ENCODE measurements at regions of chr18 and their contacts with region 1.

Region 1: GRCh38 chr18:22207021-22207758 is 37.8 kb downstream of the GATA6 start:
- DNase-seq: no peak

Region 2: DNA sequence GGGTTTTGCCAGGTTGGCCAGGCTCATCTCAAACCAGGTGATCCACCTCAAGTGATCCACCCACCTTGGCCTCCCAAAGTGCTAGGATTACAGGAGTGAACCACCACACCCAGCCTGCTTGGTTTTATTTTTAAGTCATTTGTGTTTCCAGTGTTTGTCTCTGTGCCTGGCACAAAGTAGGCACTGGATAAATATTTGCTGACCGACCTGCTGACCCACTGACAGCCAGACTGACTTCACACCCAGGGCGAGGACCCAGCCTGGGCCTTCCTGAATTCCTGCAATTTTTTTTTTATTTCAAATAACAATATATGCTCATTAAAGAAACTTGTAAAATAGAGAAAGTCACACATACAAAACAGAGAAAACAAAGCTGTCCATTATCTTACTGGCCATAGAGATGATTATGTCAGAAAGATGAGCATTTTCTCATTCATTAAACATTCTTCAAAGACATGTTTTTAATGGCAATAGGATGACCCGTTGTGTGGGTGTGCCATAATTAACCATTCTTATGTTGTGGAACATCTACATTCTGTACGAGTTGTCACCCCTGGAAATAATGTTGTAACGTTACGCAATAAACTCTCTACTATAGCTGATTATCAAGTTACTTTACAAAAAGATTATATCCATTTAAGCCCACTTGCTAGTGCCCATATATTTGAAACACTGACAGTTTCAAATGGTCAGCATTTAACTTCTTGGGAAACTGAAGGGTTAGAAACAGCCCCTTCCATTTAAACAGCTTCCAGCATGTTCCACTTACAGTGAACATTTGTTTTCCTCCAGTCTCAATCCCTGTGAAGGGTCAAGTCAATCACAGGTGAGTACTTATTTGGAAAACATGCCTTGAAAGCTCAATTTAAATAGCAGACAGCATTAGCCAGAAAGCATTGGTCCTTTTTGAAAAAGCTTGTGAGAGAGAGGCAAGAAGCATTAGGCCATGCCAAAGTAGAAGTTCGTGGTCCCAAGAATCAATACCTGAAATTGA is 63.5 kb before region 1 on chr18:
- intact Hi-C with region 1: loop called in 1 of 2 experiments (anchors 2 kb)
- DNase-seq: no peak

Region 3: GRCh38 chr18:23745366-23745765 is 1538.2 kb after region 1 on chr18:
- intact Hi-C with region 1: loop called in 1 of 2 experiments (anchors 5 kb)
- DNase-seq: no peak

Measured in posterior vena cava (tissue), 2 donors.